Transverse colon (tissue), 4 donors: ENCODE measurements at regions of chrX and their contacts with region 1.

Region 1: GRCh38 chrX:150058728-150059127 is 120.4 kb upstream of the EOLA2 start:
- DNase-seq: no peak
- H3K4me3 ChIP-seq: no peak overlapping the region
- H3K27ac ChIP-seq: no peak overlapping the region
- H3K4me1 ChIP-seq: no peaks in the 10 kb centered on the region
- H3K27me3 ChIP-seq: no peaks in the 10 kb centered on the region
- CTCF ChIP-seq: no peak
- EP300 ChIP-seq: no peak
- POLR2A ChIP-seq: no peak

Region 2: GRCh38 chrX:149631234-149632165 is 427.2 kb before region 1 on chrX and contains the start of gene TMEM185A:
- in situ Hi-C with region 1: no loop called
- intact Hi-C with region 1: loop called (anchors 5 kb)
- DNase-seq: peak; percentile 79
- H3K4me3 ChIP-seq: peak within 1 kb of the TSS; percentile 65 to 87 (median 80)
- H3K27ac ChIP-seq: peak within 1 kb of the TSS; percentile 80 to 86 (median 84)
- H3K4me1 ChIP-seq: peaks cover 0 to 15% (median 0%) of the 10 kb centered on the region in 4 donors
- H3K27me3 ChIP-seq: no peaks in the 10 kb centered on the region
- CTCF ChIP-seq: no peak
- EP300 ChIP-seq: no peak
- POLR2A ChIP-seq: no peak
- total RNA-seq, gene TMEM185A: 2.2 to 26.8 (median 12.0) TPM

Region 3: GRCh38 chrX:150587585-150588503 is 529.1 kb after region 1 on chrX:
- in situ Hi-C with region 1: no loop called
- intact Hi-C with region 1: no loop called
- DNase-seq: no peak
- H3K4me3 ChIP-seq: no peak overlapping the region
- H3K27ac ChIP-seq: no peak overlapping the region
- H3K4me1 ChIP-seq: peaks cover 0 to 4% (median 0%) of the 10 kb centered on the region in 4 donors
- H3K27me3 ChIP-seq: no peaks in the 10 kb centered on the region
- CTCF ChIP-seq: peak in 4 of 5 experiments; percentile 32 to 57 (median 44)
- EP300 ChIP-seq: no peak
- POLR2A ChIP-seq: no peak